CD14-positive monocyte (primary cell): ENCODE measurements at regions of chr19 and their contacts with region 1.

Region 1: GRCh38 chr19:17282488-17283255 is 971 bp downstream of the ANKLE1 start:
- DNase-seq: peak; percentile 76 to 83 (median 80)
- H3K4me3 ChIP-seq: peak overlapping the region; percentile 53 to 81 (median 58)
- H3K4me3 Mint-ChIP-seq: peak overlapping the region; percentile 81 to 91
- H3K27ac ChIP-seq: no peak overlapping the region
- H3K27ac Mint-ChIP-seq: peak overlapping the region in 4 of 7 donors; percentile 33 to 75 (median 46)
- H3K4me1 ChIP-seq: peaks cover 26 to 27% of the 10 kb centered on the region in 2 donors
- H3K4me1 Mint-ChIP-seq: peaks cover 19% of the 10 kb centered on the region
- H3K27me3 ChIP-seq: no peaks in the 10 kb centered on the region
- H3K27me3 Mint-ChIP-seq: peaks cover 0 to 2% (median 0%) of the 10 kb centered on the region in 3 donors
- CTCF ChIP-seq: peak; percentile 96

Region 2: DNA sequence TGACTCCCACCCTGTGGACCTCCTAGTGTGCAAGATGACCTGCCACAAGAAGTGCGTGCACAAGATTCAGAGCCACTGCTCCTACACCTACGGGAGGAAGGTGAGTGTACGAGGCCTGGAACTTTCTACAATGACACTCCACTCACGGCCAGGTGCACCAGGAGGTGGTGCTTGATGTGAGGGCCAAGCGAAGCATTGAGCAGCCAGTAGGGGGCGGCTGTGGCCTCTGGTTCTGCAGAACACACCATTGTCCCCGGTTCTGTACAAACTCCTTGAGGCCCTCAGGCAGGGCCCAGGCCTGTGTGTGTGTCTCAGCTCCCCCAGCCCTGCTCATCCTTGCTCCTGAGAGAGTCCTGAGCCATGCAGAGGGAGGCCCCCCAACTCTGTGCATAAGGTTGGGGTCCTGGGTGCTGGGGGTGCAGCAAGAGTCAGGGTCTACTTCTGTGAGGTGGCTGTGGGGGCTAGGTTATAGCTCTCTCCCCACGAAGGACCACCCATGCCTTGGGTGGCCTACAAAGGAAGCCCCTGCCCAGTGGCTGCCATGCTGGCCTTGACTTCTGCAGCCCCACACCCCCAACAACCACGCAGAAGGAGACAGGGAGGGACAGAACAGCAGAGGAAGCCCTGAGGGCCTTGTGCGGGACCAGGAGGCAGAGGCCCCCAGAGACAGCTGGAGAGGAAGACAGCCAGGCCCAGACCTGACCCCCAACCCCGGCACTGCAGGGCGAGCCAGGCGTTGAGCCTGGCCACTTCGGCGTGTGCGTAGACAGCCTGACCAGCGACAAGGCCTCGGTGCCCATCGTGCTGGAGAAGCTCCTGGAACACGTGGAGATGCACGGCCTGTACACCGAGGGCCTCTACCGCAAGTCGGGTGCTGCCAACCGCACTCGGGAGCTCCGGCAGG is 77.2 kb before region 1 on chr19:
- intact Hi-C with region 1: loop called in 1 of 2 experiments (anchors 5 kb)
- DNase-seq: peak in 2 of 3 donors; percentile 30 to 46
- H3K4me3 ChIP-seq: no peak overlapping the region
- H3K4me3 Mint-ChIP-seq: no peak overlapping the region
- H3K27ac ChIP-seq: no peak overlapping the region
- H3K27ac Mint-ChIP-seq: peak overlapping the region in 1 of 7 donors; percentile 16
- H3K4me1 ChIP-seq: no peaks in the 10 kb centered on the region
- H3K4me1 Mint-ChIP-seq: peaks cover 2% of the 10 kb centered on the region
- H3K27me3 ChIP-seq: no peaks in the 10 kb centered on the region
- H3K27me3 Mint-ChIP-seq: peaks cover 0 to 4% (median 0%) of the 10 kb centered on the region in 3 donors
- CTCF ChIP-seq: peak; percentile 68

Region 3: GRCh38 chr19:17259118-17259780 is 23.4 kb before region 1 on chr19:
- intact Hi-C with region 1: loop called in 1 of 2 experiments (anchors 2 kb)
- DNase-seq: no peak
- H3K4me3 ChIP-seq: no peak overlapping the region
- H3K4me3 Mint-ChIP-seq: no peak overlapping the region
- H3K27ac ChIP-seq: no peak overlapping the region
- H3K27ac Mint-ChIP-seq: no peak overlapping the region
- H3K4me1 ChIP-seq: no peaks in the 10 kb centered on the region
- H3K4me1 Mint-ChIP-seq: peaks cover 5% of the 10 kb centered on the region
- H3K27me3 ChIP-seq: no peaks in the 10 kb centered on the region
- H3K27me3 Mint-ChIP-seq: peaks cover 0 to 6% (median 2%) of the 10 kb centered on the region in 3 donors
- CTCF ChIP-seq: no peak